ENCODE measurements at regions of chr11 and their contacts with region 1.

Region 1: GRCh38 chr11:68751004-68751856 is at the start of gene TESMIN:
- DNase-seq: peak; percentile 62 to 65
- ATAC-seq: peak; percentile 50 to 64
- H3K4me3 ChIP-seq: peak within 1 kb of the TSS; percentile 30 to 50 (median 42)
- H3K27ac ChIP-seq: no peak within 1 kb of the TSS
- H3K4me1 ChIP-seq: peaks cover 9 to 10% of the 10 kb centered on the region in 2 donors
- H3K27me3 ChIP-seq: peaks cover 8 to 25% (median 11%) of the 10 kb centered on the region in 3 donors
- CTCF ChIP-seq: no peak
- POLR2A ChIP-seq: no peak
- total RNA-seq, gene TESMIN: 0.16 to 0.17 TPM in 2 of 4 donors, not detected in the others

Region 2: DNA sequence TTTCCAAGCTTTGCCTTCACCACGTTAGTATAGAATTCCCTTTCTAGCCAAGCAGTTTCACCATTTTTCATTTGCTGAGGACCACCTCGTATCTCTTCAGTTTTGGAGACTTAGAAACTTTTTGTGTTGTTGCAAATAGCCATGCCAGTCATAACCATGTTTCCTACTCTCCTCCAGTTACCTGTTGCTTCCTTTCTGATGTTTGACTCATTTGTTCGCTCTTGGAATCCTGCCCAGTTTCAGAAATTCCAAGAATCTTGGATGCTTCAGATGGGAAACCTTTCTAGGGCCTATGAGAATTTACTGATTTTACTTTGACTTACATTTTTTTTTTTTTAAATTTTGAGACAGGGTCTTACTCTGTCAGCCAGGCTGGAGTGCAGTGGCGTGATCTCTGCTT is 225.3 kb before region 1 on chr11:
- in situ Hi-C with region 1: no loop called
- intact Hi-C with region 1: no loop called
- DNase-seq: no peak
- ATAC-seq: no peak
- H3K4me3 ChIP-seq: no peak overlapping the region
- H3K27ac ChIP-seq: peak overlapping the region; percentile 67 to 85 (median 82)
- H3K4me1 ChIP-seq: peaks cover 88 to 91% of the 10 kb centered on the region in 2 donors
- H3K27me3 ChIP-seq: no peaks in the 10 kb centered on the region
- CTCF ChIP-seq: no peak
- POLR2A ChIP-seq: no peak

Region 3: GRCh38 chr11:68855205-68855981 is 104.2 kb after region 1 on chr11:
- in situ Hi-C with region 1: loop called in 1 of 4 experiments (anchors 25 kb)
- intact Hi-C with region 1: no loop called
- DNase-seq: peak in 1 of 2 donors; percentile 25
- ATAC-seq: peak; percentile 70
- H3K4me3 ChIP-seq: peak overlapping the region; percentile 50 to 60 (median 52)
- H3K27ac ChIP-seq: peak overlapping the region in 3 of 4 donors; percentile 15 to 66 (median 59)
- H3K4me1 ChIP-seq: peaks cover 12 to 13% of the 10 kb centered on the region in 2 donors
- H3K27me3 ChIP-seq: peaks cover 11 to 25% (median 23%) of the 10 kb centered on the region in 3 donors
- CTCF ChIP-seq: peak in 1 of 5 experiments; percentile 41
- POLR2A ChIP-seq: no peak